Upper lobe of right lung (tissue), 1 donor: ENCODE measurements at regions of chr3 and their contacts with region 1.

Region 1: DNA sequence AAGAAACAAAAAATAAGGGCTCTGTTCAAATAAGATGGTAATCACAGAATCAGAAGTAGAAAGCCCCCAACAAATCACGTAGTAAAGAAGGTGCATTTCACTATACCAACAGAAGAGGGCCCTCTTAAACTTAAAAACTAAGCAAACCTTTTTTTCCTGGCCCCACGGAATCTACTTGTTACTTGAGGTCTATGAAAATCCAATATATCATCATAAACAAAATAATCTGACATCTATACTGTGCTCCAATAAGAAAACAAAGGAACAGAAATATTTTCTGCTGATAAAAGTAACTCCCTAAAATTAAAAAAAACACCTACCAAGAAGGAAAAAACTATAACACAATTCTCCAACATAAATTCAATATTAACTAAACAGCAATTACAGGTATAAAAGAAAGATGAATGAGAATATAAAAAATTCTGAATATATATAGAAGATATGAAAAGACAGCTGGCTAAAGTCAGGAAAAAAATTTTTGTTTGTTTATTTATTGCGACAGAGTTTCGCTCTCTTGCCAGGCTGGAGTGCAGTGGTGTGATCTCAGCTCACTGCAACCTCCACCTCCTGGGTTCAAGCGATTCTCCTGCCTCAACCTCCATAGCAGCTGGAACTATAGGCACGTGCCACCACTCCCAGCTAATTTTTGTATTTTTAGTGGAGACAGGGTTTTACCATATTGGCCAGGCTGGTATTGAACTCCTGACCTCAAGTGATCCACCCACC is 81.8 kb downstream of the CLASP2 start:
- DNase-seq: no peak
- ATAC-seq: peak; percentile 52
- H3K4me3 ChIP-seq: no peak overlapping the region
- H3K27ac ChIP-seq: no peak overlapping the region
- H3K4me1 ChIP-seq: no peaks in the 10 kb centered on the region
- H3K27me3 ChIP-seq: no peaks in the 10 kb centered on the region
- CTCF ChIP-seq: peak; percentile 68

Region 2: GRCh38 chr3:33717866-33718594 is 81.7 kb after region 1 on chr3 and contains the start of gene CLASP2:
- intact Hi-C with region 1: loop called (anchors 10 kb)
- DNase-seq: peak; percentile 96
- ATAC-seq: peak; percentile 97
- H3K4me3 ChIP-seq: peak within 1 kb of the TSS; percentile 75
- H3K27ac ChIP-seq: peak within 1 kb of the TSS; percentile 97
- H3K4me1 ChIP-seq: peaks cover 12% of the 10 kb centered on the region
- H3K27me3 ChIP-seq: no peaks in the 10 kb centered on the region
- CTCF ChIP-seq: no peak
- total RNA-seq, gene CLASP2: 64.0 TPM

Region 3: DNA sequence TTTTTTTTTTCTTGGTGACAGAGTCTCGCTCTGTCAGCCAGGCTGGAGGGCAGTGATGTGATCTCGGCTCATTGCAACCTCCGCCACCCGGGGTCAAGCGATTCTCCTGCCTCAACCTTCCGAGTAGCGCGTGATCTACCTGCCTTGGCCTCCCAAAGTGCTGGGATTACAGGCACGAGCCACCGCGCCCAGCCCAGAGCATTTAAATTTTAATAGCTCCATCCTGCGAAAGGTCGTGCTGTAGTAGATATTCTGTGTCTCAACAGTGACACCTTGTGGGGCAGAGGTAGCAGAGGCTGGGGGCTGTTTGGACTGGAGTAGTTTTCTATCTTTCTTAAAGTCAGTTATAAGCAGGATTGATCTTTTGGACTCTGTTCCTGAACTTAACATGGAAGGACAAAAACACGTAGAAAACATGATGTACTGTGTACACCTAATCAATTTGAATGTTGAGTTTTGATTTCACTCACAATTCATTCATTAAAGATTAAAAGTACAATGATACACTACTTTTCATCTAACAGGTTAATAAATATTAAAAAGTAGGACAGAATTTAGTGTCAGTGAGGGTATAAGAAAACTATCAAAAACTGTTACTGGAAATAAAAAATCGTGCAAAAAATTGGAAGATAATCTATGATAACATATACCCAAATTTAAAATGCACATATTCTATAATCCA is 151.2 kb after region 1 on chr3:
- intact Hi-C with region 1: loop called (anchors 5 kb)
- DNase-seq: peak; percentile 68
- ATAC-seq: peak; percentile 91
- H3K4me3 ChIP-seq: peak overlapping the region; percentile 17
- H3K27ac ChIP-seq: no peak overlapping the region
- H3K4me1 ChIP-seq: no peaks in the 10 kb centered on the region
- H3K27me3 ChIP-seq: no peaks in the 10 kb centered on the region
- CTCF ChIP-seq: peak; percentile 86